Natural killer cell (primary cell): ENCODE measurements at regions of chr10 and their contacts with region 1.

Region 1: DNA sequence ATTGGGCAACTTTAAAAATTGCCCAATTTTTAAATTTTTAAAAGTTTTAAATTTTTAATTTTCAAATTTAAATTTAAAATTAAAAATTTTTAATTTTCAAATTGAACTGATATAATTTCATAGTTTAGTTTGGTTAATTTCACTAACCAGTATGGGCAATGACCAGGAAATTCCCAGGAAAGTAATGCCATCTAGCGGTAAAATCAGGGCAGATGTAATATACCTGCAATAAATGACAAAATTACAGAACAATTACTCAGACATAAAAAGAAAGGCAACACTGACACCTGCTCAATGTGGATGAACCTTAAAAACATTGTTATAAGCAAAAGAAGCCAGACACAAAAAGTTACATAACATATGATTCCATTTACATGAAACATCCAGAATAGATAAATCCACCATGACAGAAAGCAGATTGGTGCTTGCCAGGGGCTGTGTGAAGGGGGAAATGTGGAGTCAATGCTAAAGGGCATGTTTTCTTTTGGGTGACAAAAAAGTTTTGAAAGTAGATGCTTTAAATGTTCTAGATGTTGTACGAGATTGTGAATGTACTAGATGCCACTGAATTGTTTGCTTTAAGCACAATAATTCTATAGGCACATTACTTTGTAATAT is 28.6 kb upstream of the SLC16A12 start:
- DNase-seq: peak in 1 of 2 donors; percentile 74
- ATAC-seq: peak; percentile 53 to 75 (median 59)
- H3K4me3 ChIP-seq: no peak overlapping the region
- H3K4me3 Mint-ChIP-seq: no peak overlapping the region
- H3K27ac ChIP-seq: no peak overlapping the region
- H3K27ac Mint-ChIP-seq: no peak overlapping the region
- H3K4me1 ChIP-seq: no peaks in the 10 kb centered on the region
- H3K4me1 Mint-ChIP-seq: no peaks in the 10 kb centered on the region
- H3K27me3 ChIP-seq: no peaks in the 10 kb centered on the region
- H3K27me3 Mint-ChIP-seq: peaks cover 7 to 46% of the 10 kb centered on the region in 2 donors
- CTCF ChIP-seq: peak; percentile 75

Region 2: GRCh38 chr10:89217057-89217990 is 346.6 kb before region 1 on chr10:
- intact Hi-C with region 1: loop called (anchors 1 kb)
- DNase-seq: peak; percentile 45 to 81
- ATAC-seq: peak; percentile 51 to 67 (median 63)
- H3K4me3 ChIP-seq: no peak overlapping the region
- H3K4me3 Mint-ChIP-seq: no peak overlapping the region
- H3K27ac ChIP-seq: peak overlapping the region; percentile 26
- H3K27ac Mint-ChIP-seq: peak overlapping the region in 1 of 2 donors; percentile 70
- H3K4me1 ChIP-seq: no peaks in the 10 kb centered on the region
- H3K4me1 Mint-ChIP-seq: peaks cover 10 to 14% of the 10 kb centered on the region in 2 donors
- H3K27me3 ChIP-seq: no peaks in the 10 kb centered on the region
- H3K27me3 Mint-ChIP-seq: no peaks in the 10 kb centered on the region
- CTCF ChIP-seq: peak; percentile 74

Region 3: DNA sequence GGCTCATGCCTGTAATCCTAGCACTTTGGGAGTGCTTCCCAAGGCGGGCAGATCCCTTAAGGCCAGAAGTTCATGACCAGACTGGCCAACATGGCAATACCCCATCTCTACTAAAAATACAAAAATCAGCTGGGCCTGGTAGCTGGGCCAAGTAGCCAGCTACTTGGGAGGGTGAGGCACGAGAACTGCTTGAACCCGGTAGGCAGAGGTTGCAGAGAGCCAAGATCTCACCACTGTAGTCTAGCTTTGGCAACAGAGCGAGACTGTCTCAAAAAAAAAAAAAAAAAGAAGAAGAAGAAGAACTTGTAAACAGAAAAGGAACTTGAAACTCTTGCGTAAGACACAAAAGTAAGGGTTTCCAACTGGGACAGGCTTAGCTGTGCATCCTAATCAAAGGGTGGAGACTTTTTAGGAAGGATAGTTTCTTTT is 267.7 kb before region 1 on chr10:
- intact Hi-C with region 1: loop called (anchors 1 kb)
- DNase-seq: no peak
- ATAC-seq: no peak
- H3K4me3 ChIP-seq: no peak overlapping the region
- H3K4me3 Mint-ChIP-seq: no peak overlapping the region
- H3K27ac ChIP-seq: no peak overlapping the region
- H3K27ac Mint-ChIP-seq: peak overlapping the region in 1 of 2 donors; percentile 37
- H3K4me1 ChIP-seq: peaks cover 22% of the 10 kb centered on the region
- H3K4me1 Mint-ChIP-seq: peaks cover 28 to 31% of the 10 kb centered on the region in 2 donors
- H3K27me3 ChIP-seq: no peaks in the 10 kb centered on the region
- H3K27me3 Mint-ChIP-seq: peaks cover 0 to 2% of the 10 kb centered on the region in 2 donors
- CTCF ChIP-seq: no peak

Region 4: GRCh38 chr10:89426230-89426868 is 137.6 kb before region 1 on chr10:
- intact Hi-C with region 1: loop called (anchors 5 kb)
- DNase-seq: peak in 1 of 2 donors; percentile 65
- ATAC-seq: peak; percentile 43 to 73 (median 70)
- H3K4me3 ChIP-seq: no peak overlapping the region
- H3K4me3 Mint-ChIP-seq: no peak overlapping the region
- H3K27ac ChIP-seq: no peak overlapping the region
- H3K27ac Mint-ChIP-seq: no peak overlapping the region
- H3K4me1 ChIP-seq: no peaks in the 10 kb centered on the region
- H3K4me1 Mint-ChIP-seq: peaks cover 0 to under 1% of the 10 kb centered on the region in 2 donors
- H3K27me3 ChIP-seq: no peaks in the 10 kb centered on the region
- H3K27me3 Mint-ChIP-seq: peaks cover 0 to 6% of the 10 kb centered on the region in 2 donors
- CTCF ChIP-seq: peak; percentile 53